PC-9 (cell line): ENCODE measurements at regions of chr14 and their contacts with region 1.

Region 1: GRCh38 chr14:60248697-60249318 is at the start of gene PPM1A:
- DNase-seq: peak; percentile 88 to 95
- H3K4me3 ChIP-seq: peak within 1 kb of the TSS; percentile 63
- H3K27ac ChIP-seq: peak within 1 kb of the TSS; percentile 89
- H3K4me1 ChIP-seq: peaks cover 24% of the 10 kb centered on the region
- H3K27me3 ChIP-seq: no peaks in the 10 kb centered on the region
- CTCF ChIP-seq: no peak
- total RNA-seq, gene PPM1A: 60.9 and 62.2 TPM in 2 replicates

Region 2: GRCh38 chr14:60091550-60092530 is 157.0 kb before region 1 on chr14 and contains the start of gene PCNX4:
- CTCF ChIA-PET with region 1: no interaction called
- POLR2A ChIA-PET with region 1: interaction called, 3 read pairs
- intact Hi-C with region 1: loop called (anchors 1 kb)
- DNase-seq: peak; percentile 96
- H3K4me3 ChIP-seq: peak within 1 kb of the TSS; percentile 90
- H3K27ac ChIP-seq: peak within 1 kb of the TSS; percentile 94
- H3K4me1 ChIP-seq: peaks cover 20% of the 10 kb centered on the region
- H3K27me3 ChIP-seq: no peaks in the 10 kb centered on the region
- CTCF ChIP-seq: no peak
- total RNA-seq, gene PCNX4: 58.3 and 65.1 TPM in 2 replicates

Region 3: GRCh38 chr14:60195179-60195810 is 53.5 kb before region 1 on chr14:
- CTCF ChIA-PET with region 1: no interaction called
- POLR2A ChIA-PET with region 1: interaction called, 6 read pairs
- intact Hi-C with region 1: loop called (anchors 5 kb)
- DNase-seq: no peak
- H3K4me3 ChIP-seq: no peak overlapping the region
- H3K27ac ChIP-seq: no peak overlapping the region
- H3K4me1 ChIP-seq: peaks cover 14% of the 10 kb centered on the region
- H3K27me3 ChIP-seq: no peaks in the 10 kb centered on the region
- CTCF ChIP-seq: no peak

Region 4: GRCh38 chr14:60222783-60223182 is 26.0 kb before region 1 on chr14:
- CTCF ChIA-PET with region 1: interaction called, 3 read pairs
- POLR2A ChIA-PET with region 1: interaction called, 11 read pairs
- intact Hi-C with region 1: loop called (anchors 1 kb)
- DNase-seq: peak; percentile 80 to 92
- H3K4me3 ChIP-seq: no peak overlapping the region
- H3K27ac ChIP-seq: no peak overlapping the region
- H3K4me1 ChIP-seq: peaks cover 8% of the 10 kb centered on the region; the same call in 1 of the 2 replicates
- H3K27me3 ChIP-seq: no peaks in the 10 kb centered on the region
- CTCF ChIP-seq: no peak

Region 5: DNA sequence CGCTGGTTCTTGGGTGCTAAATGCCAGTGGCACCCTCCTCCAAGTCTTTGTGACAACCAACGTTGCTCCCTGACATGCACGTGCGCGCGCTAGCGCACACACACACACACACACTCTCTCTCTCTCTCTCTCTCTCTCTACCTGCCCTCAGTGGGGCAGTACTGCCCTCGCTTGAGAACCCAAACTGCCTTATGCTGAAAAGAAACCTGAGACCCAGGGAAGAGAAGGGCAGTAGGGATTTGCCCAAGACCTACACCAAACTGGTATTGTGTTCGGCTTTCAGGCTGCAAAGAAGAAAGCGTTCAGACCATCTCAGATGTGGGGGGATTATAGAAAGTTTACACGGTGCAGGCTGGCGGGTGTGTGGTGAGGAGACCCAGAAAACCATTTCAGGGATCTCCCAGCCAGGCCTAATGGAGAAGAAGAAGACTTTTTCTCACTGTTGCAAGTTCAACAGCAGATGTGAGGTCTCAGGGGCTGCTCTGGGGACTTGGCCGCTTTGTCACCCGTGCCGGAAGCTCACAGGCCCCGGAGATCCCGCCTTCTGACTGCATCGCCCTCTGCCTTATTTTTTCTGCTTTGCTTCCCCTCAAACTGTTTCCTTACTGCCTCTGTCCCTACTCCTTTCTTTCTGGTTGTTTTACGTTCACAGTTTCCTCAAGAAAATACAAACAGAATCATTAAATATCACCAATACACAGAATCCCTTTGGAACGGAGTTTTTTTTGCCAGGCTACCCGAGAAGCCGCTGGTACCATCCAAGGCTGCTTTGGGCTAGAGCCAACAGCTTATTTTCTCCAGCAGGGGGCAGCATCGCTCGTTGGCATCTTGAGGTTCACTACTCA is 82.6 kb after region 1 on chr14:
- CTCF ChIA-PET with region 1: interaction called, 4 read pairs
- POLR2A ChIA-PET with region 1: interaction called, 13 read pairs
- intact Hi-C with region 1: loop called (anchors 5 kb)
- DNase-seq: peak in 1 of 2 experiments; percentile 66
- H3K4me3 ChIP-seq: peak overlapping the region; percentile 66
- H3K27ac ChIP-seq: no peak overlapping the region
- H3K4me1 ChIP-seq: no peaks in the 10 kb centered on the region
- H3K27me3 ChIP-seq: no peaks in the 10 kb centered on the region
- CTCF ChIP-seq: peak; percentile 98